GM10248 (cell line): ENCODE measurements at regions of chr3 and their contacts with region 1.

Region 1: GRCh38 chr3:4986782-4987537 is 7.7 kb downstream of the BHLHE40 start:
- DNase-seq: peak; percentile 80
- CTCF ChIP-seq: no peak

Region 2: DNA sequence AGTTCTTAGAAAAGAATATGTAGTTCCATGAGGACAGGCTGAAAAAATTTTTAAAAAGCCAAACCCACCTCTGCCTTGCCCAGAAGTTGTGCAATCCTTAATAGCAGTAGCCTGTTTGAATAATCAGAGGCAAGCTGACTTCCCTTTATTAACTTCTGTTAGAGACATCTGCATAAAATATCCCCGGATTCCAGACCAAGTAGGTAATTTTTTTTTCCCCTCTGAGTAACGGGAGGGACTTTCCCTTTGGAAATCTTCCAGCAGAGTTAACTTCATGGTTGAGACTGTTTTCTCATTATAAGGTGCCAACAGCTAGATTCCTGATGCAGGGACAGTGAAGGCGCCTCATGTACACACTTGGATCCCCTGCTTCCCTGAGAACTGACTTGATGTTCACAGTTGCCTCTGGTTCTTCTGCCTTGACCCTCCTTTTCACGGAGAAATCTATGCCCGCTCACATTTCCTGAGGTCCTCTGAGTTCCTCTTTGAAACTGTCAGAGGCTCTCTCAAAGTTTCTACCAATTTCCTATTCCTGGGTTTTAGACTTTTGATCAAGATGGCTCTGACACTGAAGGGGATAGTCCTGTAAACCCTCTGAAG is 235.4 kb before region 1 on chr3:
- CTCF ChIA-PET with region 1: interaction called, 28 read pairs
- POLR2A ChIA-PET with region 1: interaction called, 18 read pairs
- DNase-seq: peak; percentile 49
- CTCF ChIP-seq: no peak

Region 3: DNA sequence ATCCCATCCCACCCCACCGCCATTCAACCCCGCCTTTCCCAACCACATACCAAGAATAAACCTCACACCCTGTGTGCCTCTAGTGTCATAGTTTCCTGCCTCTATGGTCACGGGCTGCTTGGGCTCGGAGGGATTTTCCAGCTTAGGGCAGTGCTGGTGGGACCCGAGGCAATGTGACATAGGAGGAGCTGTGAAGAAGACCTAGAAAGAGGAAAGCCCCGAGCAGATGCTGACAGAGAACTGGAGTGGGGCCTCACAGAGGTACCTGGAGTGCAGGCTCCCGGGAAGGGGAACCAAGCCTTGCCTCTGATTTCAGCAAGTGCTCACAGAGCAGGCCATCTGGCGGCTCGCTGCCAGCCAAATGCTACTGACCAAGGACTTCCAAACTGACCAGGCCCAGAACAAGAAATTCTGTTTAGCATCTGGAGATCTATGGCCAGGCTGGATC is 19.8 kb after region 1 on chr3:
- CTCF ChIA-PET with region 1: interaction called, 22 read pairs
- POLR2A ChIA-PET with region 1: interaction called, 10 read pairs
- DNase-seq: peak; percentile 84
- CTCF ChIP-seq: peak; percentile 11

Region 4: DNA sequence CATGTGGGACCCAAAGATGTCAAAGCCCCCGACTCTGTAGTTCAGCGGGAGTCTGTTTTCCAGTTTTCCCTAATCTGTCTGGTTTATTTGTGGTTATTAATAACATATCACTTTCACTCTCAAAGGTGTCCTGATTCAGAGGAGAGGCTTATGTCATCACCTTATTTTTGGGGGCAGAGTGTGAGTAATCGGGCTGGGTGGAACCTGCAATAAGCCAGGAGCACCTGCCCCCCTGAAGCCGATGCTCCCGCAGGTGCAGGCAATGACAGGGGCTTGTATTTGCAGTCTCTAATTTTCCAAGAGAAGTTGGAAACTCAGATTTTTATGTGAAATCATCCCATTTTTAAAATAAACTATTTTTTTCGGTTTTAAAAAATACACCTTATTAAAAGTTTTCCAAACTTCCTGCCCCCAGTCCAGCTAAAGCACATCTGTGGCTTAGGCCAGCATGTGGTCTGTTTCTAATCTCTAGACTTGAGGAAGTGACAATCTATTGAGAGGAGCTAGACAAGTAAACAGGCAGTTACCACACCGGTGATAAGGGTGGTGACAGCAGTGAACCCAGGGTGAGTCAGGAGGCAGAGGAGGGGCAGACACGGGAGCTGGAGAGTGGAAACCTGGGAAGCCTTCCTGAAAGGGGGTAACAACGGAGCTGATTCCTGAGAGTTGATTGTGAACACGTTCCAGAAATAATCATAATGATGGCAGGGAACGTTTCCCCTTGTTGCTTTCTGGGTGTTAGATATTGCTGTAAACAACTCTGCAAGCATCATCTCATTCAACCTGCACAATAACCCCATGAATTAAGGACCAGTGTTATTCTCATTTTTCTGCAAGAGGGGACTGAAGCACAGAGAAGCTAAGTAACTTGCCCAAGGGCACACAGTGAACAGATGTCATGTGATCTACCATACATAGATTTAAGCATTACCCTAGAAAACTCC is 29.5 kb after region 1 on chr3:
- CTCF ChIA-PET with region 1: interaction called, 40 read pairs
- POLR2A ChIA-PET with region 1: interaction called, 10 read pairs
- DNase-seq: peak; percentile 54
- CTCF ChIP-seq: no peak

Region 5: GRCh38 chr3:5026331-5027218 is 39.6 kb after region 1 on chr3:
- CTCF ChIA-PET with region 1: interaction called, 40 read pairs
- POLR2A ChIA-PET with region 1: interaction called, 9 read pairs
- DNase-seq: peak; percentile 72
- CTCF ChIP-seq: peak; percentile 72

Region 6: DNA sequence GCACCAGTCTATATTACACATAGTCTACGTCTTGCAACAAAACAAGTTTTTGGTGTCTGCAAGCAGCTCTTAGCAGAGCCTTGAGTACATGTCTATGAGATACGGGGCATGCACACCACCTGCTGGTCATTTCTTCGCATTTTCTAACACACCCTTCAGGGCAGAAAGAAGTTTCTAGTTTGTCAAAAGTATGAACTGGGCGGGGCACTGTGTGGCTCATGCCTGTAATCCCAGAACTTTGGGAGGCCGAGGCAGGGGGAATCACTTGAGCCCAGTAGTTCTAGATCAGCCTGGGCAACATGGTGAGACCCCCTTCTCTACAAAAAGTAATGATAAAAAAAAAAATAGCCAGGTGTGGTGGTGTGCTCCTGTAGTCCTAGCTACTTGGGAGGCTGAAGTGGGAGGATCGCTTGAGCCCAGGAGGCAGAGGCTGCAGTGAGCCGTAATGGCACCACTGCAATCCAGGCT is 70.9 kb after region 1 on chr3:
- CTCF ChIA-PET with region 1: interaction called, 25 read pairs
- POLR2A ChIA-PET with region 1: interaction called, 17 read pairs
- DNase-seq: peak; percentile 67
- CTCF ChIP-seq: peak; percentile 78